Activated B cell treated with CpG ODN at 0.5 μM for 24 hours (primary cell): ENCODE measurements at regions of chr10 and their contacts with region 1.

Region 1: GRCh38 chr10:84205049-84205852 is 10.9 kb downstream of the CDHR1 start:
- DNase-seq: peak; percentile 49
- ATAC-seq: peak; percentile 88
- H3K4me3 Mint-ChIP-seq: no peak overlapping the region
- H3K27ac Mint-ChIP-seq: no peak overlapping the region
- H3K4me1 Mint-ChIP-seq: no peaks in the 10 kb centered on the region
- H3K27me3 Mint-ChIP-seq: peaks cover 13% of the 10 kb centered on the region
- CTCF ChIP-seq: no peak

Region 2: DNA sequence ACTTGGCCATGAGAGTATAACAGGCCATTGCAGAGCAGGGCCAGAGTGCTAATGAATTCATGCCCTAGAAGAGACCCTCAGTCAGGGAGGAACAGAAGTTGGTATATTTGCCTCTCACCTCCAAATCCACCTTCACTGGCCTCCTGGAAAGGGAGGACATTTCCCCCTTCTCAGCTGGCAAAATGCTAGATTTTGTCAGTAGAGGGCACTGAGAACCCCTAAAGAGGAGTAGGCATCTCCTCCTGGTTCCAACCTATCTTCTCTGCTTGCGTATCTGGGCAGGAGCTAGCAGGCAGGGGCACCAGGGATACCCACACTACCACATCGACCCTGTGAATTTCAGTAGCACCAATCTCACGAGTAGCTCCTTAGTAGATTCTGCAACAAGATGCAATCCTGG is 145.7 kb before region 1 on chr10:
- CTCF ChIA-PET with region 1: interaction called, 5 read pairs
- POLR2A ChIA-PET with region 1: no interaction called
- intact Hi-C with region 1: loop called (anchors 1 kb)
- DNase-seq: no peak
- ATAC-seq: no peak
- H3K4me3 Mint-ChIP-seq: no peak overlapping the region
- H3K27ac Mint-ChIP-seq: no peak overlapping the region
- H3K4me1 Mint-ChIP-seq: no peaks in the 10 kb centered on the region
- H3K27me3 Mint-ChIP-seq: peaks cover 2% of the 10 kb centered on the region
- CTCF ChIP-seq: no peak

Region 3: DNA sequence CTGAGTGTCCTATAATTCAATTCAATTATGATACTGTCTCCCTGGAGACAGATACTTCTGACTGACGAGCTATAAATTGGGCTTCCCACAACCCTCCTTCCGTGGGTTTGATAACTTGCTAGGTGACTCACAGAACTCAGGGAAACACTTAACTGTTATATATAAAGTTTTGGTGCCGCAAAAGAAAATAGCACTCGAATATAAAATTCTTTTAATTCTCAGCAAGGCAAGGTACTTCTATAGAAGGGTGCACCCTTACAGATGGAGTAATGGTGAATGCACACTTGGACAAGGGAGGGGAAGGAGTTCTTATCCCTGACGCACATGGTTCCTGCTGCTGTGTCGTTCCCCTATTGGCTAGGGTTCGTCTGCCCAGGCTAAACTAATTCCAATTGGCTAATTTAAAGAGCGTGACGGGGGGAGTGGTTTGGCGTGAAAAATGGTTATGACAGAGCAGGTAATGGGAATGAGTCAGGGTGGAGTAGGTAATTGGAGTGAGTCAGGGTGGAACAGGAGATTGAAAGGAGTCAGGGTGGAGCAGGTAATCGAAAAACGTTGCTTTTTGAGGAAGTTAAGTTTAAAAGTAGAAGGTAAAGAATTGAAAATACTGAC is 86.8 kb before region 1 on chr10:
- CTCF ChIA-PET with region 1: no interaction called
- POLR2A ChIA-PET with region 1: no interaction called
- intact Hi-C with region 1: no loop called
- DNase-seq: no peak
- ATAC-seq: no peak
- H3K4me3 Mint-ChIP-seq: no peak overlapping the region
- H3K27ac Mint-ChIP-seq: no peak overlapping the region
- H3K4me1 Mint-ChIP-seq: no peaks in the 10 kb centered on the region
- H3K27me3 Mint-ChIP-seq: peaks cover 6% of the 10 kb centered on the region
- CTCF ChIP-seq: no peak